ENCODE measurements at regions of chr12 and their contacts with region 1.

Region 1: DNA sequence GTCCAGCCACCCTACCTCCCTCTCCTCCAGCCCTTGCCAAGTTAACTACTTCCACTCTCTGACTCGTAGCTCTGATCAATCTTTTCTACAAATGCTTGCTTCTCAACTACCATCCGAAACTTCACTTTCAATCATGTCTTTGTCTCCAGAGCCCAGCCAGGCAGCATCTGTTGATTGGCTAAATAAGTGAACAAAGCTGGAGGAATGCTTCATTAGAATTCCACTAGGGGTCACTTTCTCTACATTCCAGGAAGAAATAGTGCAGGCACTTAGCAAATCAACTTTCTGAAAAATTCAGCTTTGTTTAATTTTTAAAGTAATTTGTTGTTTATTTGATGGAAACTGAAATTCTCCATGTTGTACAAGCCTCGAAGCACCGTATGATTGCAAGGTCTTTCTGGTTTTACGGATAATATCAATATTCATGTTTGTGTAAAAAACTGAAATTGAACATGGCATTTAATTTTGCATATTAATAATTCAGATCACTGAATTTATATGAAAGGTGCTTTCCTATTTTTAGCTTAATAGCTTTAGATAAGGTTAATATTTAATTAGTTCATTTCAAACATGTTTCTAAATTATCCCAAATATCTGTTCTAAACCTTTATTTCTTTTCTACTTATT is 32.4 kb upstream of the HELB start:
- DNase-seq: no peak
- ATAC-seq: no peak
- H3K4me3 ChIP-seq: no peak overlapping the region
- H3K27ac ChIP-seq: no peak overlapping the region
- H3K4me1 ChIP-seq: no peaks in the 10 kb centered on the region
- H3K27me3 ChIP-seq: no peaks in the 10 kb centered on the region

Region 2: GRCh38 chr12:66309606-66310005 is 39.7 kb after region 1 on chr12:
- intact Hi-C with region 1: no loop called
- DNase-seq: no peak
- ATAC-seq: no peak
- H3K4me3 ChIP-seq: no peak overlapping the region
- H3K27ac ChIP-seq: no peak overlapping the region
- H3K4me1 ChIP-seq: peaks cover 0 to under 1% of the 10 kb centered on the region in 2 donors
- H3K27me3 ChIP-seq: no peaks in the 10 kb centered on the region

Region 3: DNA sequence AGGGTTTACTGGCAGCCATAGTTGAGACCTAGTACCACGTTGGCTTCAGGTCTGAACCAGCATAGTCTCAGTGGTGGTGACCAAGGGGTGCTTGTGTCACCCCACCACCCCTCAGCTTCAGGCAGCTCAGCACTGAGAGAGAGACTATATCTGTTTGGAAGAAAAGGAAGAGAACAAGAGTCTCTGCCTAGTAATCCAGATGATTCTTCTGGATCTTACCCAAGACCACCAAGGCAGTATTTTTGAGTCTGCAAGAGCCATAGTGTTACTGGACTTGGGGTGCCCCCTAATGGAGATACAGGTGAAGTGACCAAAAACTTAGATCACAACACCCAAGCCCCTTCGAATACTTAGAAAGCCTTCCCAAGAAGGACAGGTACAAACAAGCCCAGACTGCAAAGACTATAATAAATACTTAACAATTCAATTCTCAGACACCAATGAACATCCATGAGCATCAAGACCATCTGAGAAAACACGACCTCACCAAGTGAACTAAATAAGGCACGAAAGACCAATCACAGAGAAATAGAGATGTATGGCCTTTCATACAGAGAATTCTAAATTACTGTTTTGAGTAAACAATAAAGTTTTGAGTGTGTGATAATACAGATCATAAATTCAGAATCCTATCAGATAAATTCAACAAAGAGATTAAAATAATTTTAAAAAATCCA is 139.5 kb after region 1 on chr12:
- intact Hi-C with region 1: loop called in 1 of 2 experiments (anchors 5 kb)
- DNase-seq: no peak
- ATAC-seq: no peak
- H3K4me3 ChIP-seq: no peak overlapping the region
- H3K27ac ChIP-seq: no peak overlapping the region
- H3K4me1 ChIP-seq: no peaks in the 10 kb centered on the region
- H3K27me3 ChIP-seq: no peaks in the 10 kb centered on the region

Region 4: DNA sequence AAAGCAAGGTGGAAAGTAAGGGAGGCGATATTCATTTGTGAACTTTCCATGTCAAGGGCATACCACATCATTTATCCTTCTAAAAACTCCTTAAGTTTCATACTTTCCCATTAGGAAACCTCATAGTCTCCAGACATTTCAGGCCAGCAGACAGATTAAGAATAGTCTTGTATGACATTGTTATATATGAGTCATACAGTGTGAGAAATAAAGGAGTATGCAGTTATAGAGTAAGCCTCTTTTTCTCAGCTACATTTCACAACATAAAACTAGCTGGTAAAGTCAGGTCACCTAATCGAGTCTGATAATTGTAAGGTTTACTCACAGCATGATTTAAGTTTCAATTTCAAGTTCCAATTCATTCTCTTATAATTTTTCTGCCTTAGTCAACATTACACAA is 244.7 kb after region 1 on chr12:
- intact Hi-C with region 1: no loop called
- DNase-seq: no peak
- ATAC-seq: no peak
- H3K4me3 ChIP-seq: no peak overlapping the region
- H3K27ac ChIP-seq: no peak overlapping the region
- H3K4me1 ChIP-seq: no peaks in the 10 kb centered on the region
- H3K27me3 ChIP-seq: no peaks in the 10 kb centered on the region

Region 5: GRCh38 chr12:66662729-66663128 is 392.9 kb after region 1 on chr12:
- intact Hi-C with region 1: no loop called
- DNase-seq: no peak
- ATAC-seq: no peak
- H3K4me3 ChIP-seq: no peak overlapping the region
- H3K27ac ChIP-seq: no peak overlapping the region
- H3K4me1 ChIP-seq: no peaks in the 10 kb centered on the region
- H3K27me3 ChIP-seq: no peaks in the 10 kb centered on the region

Region 6: GRCh38 chr12:66688846-66689439 is 419.1 kb after region 1 on chr12:
- intact Hi-C with region 1: loop called (anchors 5 to 10 kb)
- DNase-seq: no peak
- ATAC-seq: peak; percentile 41
- H3K4me3 ChIP-seq: no peak overlapping the region
- H3K27ac ChIP-seq: no peak overlapping the region
- H3K4me1 ChIP-seq: no peaks in the 10 kb centered on the region
- H3K27me3 ChIP-seq: no peaks in the 10 kb centered on the region

Region 7: GRCh38 chr12:66693901-66694675 is 424.2 kb after region 1 on chr12:
- intact Hi-C with region 1: loop called (anchors 5 to 10 kb)
- DNase-seq: no peak
- ATAC-seq: peak; percentile 76
- H3K4me3 ChIP-seq: no peak overlapping the region
- H3K27ac ChIP-seq: no peak overlapping the region
- H3K4me1 ChIP-seq: no peaks in the 10 kb centered on the region
- H3K27me3 ChIP-seq: no peaks in the 10 kb centered on the region

Measured in aorta (tissue), 5 donors.